IMR-90 (cell line): ENCODE measurements at regions of chr3 and their contacts with region 1.

Region 1: DNA sequence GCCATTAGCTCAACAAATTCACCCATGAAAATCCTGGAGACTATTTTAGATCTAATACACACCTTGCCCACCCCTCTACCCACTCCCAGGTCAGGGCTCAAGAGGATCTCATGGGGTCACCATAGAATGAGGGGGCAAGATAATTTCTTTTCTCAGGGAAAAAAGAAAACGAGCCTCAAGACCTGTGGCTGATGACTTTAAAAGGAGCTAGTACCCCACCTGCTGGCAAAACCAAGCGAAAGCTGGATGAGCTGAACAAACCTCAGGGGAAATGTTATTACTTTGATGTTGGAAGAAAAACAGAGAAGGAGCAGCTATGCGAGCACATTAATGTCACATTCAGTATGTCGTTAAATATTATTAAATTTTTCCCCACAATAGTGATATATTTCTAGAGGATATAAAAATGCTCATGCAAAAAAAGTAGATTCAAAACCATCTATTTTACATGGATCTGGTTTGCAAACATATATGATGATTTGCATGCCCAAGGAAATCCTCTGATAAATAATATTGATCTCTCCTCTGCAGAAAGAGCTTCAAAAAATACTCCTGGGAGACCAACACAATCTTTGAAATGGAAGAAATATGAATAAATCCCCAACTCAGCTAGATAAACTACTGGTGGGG is 37.7 kb downstream of the PLD1 start:
- DNase-seq: peak; percentile 76
- ATAC-seq: peak; percentile 41
- H3K4me3 ChIP-seq: no peak overlapping the region
- H3K27ac ChIP-seq: no peak overlapping the region
- H3K4me1 ChIP-seq: peaks cover 5% of the 10 kb centered on the region; the same call in 1 of the 2 replicates
- H3K27me3 ChIP-seq: no peaks in the 10 kb centered on the region
- CTCF ChIP-seq: peak; percentile 78
- POLR2A ChIP-seq: no peak
- RAD21 ChIP-seq: peak; percentile 84

Region 2: DNA sequence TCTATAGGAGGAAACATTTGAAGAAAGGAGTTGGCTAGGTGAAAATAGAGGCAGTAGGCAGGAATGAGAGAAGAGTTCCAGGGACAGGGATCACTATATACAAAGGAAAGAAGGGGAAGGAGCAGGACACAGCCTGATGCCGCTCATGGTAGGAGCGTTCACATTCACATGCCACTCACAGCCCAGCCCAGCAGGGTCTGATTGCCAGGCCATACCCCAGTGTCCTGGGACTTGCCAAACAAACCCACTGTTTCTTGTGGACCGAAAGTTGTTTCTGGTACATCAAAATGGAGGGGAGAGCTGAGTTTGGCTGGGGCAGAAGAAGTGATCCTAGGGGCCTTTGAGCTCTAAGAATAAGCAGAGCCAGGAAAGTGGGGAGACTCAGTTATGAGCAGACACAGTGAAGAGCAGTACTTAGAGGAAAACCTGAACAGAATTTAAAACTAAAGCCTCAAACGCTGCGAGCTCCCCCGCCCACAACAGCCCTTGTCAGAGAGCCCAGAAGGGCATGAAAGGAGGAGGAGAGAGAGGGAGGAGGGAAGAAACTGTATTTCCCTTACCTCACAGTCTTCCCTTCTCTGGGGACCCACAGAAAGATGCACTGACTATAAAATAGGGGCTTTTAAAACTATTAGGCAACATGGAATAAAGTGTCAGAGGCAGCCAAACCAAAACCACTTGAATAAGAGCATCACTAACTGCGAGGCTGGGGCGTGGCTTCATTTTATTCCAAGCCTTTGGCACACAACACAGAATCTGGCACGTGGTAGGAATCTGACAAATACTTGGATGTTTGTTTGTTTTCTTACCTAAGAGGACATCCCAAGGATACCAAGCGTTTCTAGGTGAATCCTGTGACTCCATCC is 1031.6 kb before region 1 on chr3:
- CTCF ChIA-PET with region 1: no interaction called
- POLR2A ChIA-PET with region 1: no interaction called
- dilution Hi-C with region 1: no loop called
- in situ Hi-C with region 1: no loop called
- intact Hi-C with region 1: no loop called
- DNase-seq: peak; percentile 72
- ATAC-seq: peak; percentile 54
- H3K4me3 ChIP-seq: no peak overlapping the region
- H3K27ac ChIP-seq: peak overlapping the region; percentile 88
- H3K4me1 ChIP-seq: peaks cover 22% of the 10 kb centered on the region
- H3K27me3 ChIP-seq: no peaks in the 10 kb centered on the region
- CTCF ChIP-seq: no peak
- POLR2A ChIP-seq: no peak
- RAD21 ChIP-seq: no peak

Region 3: DNA sequence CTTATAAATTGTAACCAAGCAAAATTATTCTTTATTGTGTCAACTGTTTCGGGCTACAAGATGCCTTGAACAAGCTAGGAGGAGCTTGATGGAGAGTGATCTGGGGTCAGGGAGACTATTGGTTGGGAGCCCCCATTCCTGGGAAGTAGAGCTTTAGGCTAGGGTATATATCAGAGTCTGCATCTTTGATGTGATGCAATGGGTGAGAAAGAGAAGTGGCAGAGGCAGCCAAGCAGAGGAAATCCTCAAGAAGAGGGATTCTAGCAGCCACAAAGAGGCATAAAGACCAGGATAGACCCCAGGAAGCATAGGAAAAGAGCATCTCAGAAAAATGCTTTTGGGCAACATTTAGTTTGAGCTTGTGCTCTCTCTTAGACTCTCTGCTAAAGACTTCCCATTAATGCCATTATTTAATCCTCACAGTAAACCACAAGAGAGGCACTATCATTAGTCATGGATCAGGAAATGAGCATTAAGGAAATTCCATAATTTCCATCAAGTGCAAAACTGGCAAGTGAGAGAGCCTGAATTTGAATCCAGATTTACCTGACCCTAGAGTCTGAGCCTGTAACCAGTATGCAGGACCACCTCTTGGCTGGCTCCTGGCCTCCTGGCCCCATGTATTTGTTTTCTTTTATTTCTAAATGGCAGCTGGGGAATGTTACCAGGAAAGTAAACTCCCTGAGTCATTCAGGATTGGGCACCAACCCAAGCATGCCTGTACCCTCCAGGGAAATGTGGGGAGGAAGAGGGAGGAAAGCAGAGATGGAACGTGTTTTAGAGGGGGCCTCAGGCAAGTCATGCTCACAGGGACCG is 1021.3 kb before region 1 on chr3:
- CTCF ChIA-PET with region 1: no interaction called
- POLR2A ChIA-PET with region 1: no interaction called
- dilution Hi-C with region 1: no loop called
- in situ Hi-C with region 1: no loop called
- intact Hi-C with region 1: loop called (anchors 10 kb)
- DNase-seq: peak; percentile 82
- ATAC-seq: peak; percentile 57
- H3K4me3 ChIP-seq: no peak overlapping the region
- H3K27ac ChIP-seq: peak overlapping the region; percentile 97
- H3K4me1 ChIP-seq: peaks cover 28% of the 10 kb centered on the region
- H3K27me3 ChIP-seq: no peaks in the 10 kb centered on the region
- CTCF ChIP-seq: no peak
- POLR2A ChIP-seq: no peak
- RAD21 ChIP-seq: no peak

Region 4: GRCh38 chr3:170961616-170962400 is 810.7 kb before region 1 on chr3:
- CTCF ChIA-PET with region 1: interaction called, 4 read pairs
- POLR2A ChIA-PET with region 1: no interaction called
- dilution Hi-C with region 1: no loop called
- in situ Hi-C with region 1: loop called (anchors 25 kb)
- intact Hi-C with region 1: loop called (anchors 1 kb)
- DNase-seq: peak; percentile 54
- ATAC-seq: peak; percentile 75
- H3K4me3 ChIP-seq: no peak overlapping the region
- H3K27ac ChIP-seq: no peak overlapping the region
- H3K4me1 ChIP-seq: peaks cover 4% of the 10 kb centered on the region; the same call in 1 of the 2 replicates
- H3K27me3 ChIP-seq: no peaks in the 10 kb centered on the region
- CTCF ChIP-seq: peak; percentile 71
- POLR2A ChIP-seq: no peak
- RAD21 ChIP-seq: peak; percentile 78

Region 5: DNA sequence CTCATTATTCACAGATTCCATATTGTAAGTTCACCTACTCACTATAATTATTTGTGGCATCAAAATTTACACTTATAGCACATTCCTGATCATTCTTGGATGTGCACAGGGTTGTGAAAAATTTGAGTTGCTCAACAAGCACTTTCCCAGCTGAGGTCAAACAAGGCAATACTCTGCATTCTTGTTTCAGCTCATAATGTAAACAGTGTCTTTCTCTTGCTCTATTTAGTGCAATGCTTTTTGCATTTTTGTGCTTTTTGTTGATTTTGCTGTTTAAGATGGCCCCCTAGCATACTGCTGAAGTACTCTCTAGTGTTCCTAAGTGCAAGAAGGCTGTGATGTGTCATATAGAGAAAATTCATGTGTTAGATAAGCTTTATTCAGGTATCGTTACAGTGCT is 245.7 kb before region 1 on chr3:
- CTCF ChIA-PET with region 1: no interaction called
- POLR2A ChIA-PET with region 1: no interaction called
- dilution Hi-C with region 1: no loop called
- in situ Hi-C with region 1: no loop called
- intact Hi-C with region 1: no loop called
- DNase-seq: peak; percentile 87
- ATAC-seq: peak; percentile 80
- H3K4me3 ChIP-seq: no peak overlapping the region
- H3K27ac ChIP-seq: peak overlapping the region; percentile 84; the same call in 1 of the 2 replicates
- H3K4me1 ChIP-seq: peaks cover 23% of the 10 kb centered on the region
- H3K27me3 ChIP-seq: no peaks in the 10 kb centered on the region
- CTCF ChIP-seq: no peak
- POLR2A ChIP-seq: no peak
- RAD21 ChIP-seq: peak; percentile 15; the same call in 1 of the 2 replicates

Region 6: DNA sequence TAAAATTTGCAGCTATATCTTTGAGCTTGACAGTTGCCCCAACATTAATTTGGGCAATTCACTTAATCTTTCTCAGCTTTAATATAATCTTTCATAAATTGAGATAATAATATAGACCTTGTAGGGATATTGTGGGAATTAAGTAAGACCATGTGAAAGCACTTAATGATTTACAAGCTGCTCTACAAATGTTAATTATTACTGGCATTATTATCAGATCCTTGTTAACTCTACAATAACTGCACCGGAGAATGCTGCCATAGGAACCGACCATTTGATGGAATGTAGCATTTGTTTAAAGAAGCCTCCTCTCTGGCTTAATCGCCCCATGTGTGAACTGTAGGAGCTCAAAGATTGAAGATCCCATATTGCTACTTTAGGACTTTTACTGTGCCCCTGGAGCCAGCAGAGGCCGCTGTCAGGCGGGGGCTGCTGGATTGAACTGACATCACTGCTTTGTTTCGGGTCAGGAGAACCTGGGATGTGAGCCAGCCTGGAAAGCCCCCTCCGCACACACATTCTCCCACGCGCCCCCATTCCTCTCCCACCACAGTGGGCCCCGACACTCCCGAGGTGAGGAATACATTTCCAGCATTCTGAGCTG is 158.1 kb before region 1 on chr3:
- CTCF ChIA-PET with region 1: interaction called, 11 read pairs
- POLR2A ChIA-PET with region 1: no interaction called
- dilution Hi-C with region 1: no loop called
- in situ Hi-C with region 1: no loop called
- intact Hi-C with region 1: no loop called
- DNase-seq: peak; percentile 41
- ATAC-seq: peak; percentile 66
- H3K4me3 ChIP-seq: no peak overlapping the region
- H3K27ac ChIP-seq: no peak overlapping the region
- H3K4me1 ChIP-seq: no peaks in the 10 kb centered on the region
- H3K27me3 ChIP-seq: no peaks in the 10 kb centered on the region
- CTCF ChIP-seq: peak; percentile 62
- POLR2A ChIP-seq: no peak
- RAD21 ChIP-seq: peak; percentile 60

Region 7: DNA sequence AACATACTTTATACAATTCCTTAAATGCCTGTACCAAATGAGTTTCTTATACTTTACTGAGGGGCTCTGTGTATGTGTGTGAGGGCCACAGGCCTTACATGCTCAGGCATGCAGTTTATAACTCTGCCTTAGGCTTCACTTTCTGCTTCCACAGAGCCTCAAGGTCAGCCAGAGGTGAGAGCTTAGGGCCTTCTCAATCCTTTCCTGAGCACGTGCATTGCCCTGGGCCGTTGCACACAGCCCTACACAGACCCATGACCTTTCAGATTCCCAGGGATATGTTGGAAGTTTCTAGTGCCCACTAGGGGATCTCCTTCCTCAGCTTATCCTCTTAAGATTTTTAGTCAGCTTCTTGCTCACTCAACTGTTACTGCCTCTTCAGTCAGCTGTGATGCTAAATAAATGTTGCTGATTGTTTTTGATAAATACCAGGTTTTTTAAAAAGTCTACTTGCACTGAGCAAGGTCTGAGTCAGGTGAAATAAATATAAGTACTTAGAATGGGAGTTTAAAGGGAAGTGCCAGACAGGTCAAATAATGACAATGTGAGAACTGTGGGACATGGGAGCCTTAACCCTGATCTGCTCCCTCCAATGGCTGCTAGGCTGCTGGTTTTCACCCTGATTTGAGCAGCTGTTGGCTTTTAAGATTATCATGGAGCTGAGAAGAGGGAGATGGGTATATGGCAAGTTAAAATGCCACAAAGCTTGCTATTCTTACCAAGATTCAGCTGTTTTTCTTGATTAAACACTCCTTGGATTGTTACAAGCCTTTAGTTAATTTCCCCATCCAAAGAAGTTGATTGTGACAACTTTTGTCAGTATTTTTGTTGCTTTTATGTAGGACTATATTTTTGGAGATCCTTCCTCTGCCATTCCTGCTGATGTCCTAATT is 131.8 kb before region 1 on chr3:
- CTCF ChIA-PET with region 1: interaction called, 11 read pairs
- POLR2A ChIA-PET with region 1: no interaction called
- dilution Hi-C with region 1: no loop called
- in situ Hi-C with region 1: loop called (anchors 5 kb)
- intact Hi-C with region 1: no loop called
- DNase-seq: peak; percentile 56
- ATAC-seq: peak; percentile 91
- H3K4me3 ChIP-seq: no peak overlapping the region
- H3K27ac ChIP-seq: peak overlapping the region; percentile 67
- H3K4me1 ChIP-seq: peaks cover 5% of the 10 kb centered on the region
- H3K27me3 ChIP-seq: no peaks in the 10 kb centered on the region
- CTCF ChIP-seq: peak; percentile 32
- POLR2A ChIP-seq: no peak
- RAD21 ChIP-seq: no peak

Region 8: DNA sequence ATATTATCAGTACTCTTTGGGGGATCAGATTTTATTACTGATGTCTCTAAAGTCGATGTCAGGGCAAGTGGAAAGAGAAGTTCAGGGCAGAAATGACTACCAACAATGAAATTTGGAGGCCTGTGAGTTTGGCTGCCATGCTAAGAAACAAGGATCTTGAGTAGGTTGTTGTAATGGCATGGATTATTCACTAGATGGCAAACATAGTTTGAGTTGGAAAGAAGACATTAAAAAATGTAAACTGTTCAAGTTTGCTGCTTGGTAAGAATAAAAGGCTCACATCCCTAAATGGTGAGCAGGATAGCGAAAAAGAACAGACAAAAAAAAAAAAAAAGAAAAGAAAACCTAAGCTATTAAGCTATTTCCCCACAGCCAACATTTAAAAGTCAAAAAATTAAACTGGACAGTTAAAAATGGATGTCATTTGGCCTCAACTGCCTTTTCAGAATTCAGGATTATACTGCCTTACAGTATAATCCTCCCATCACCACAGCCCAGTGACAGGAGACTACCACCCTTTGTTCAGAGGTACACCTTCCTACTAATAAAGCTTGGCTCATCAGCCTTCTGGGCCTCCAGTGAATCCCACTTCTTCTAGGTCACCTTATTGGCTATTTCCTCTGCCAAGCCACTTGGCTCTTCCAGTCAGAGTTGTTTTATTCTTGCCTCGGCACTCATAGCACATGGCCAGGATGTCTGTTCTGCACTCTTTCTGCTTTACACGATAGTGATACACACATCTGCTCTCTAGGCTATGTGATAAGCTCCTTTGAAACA is 126.0 kb before region 1 on chr3:
- CTCF ChIA-PET with region 1: interaction called, 11 read pairs
- POLR2A ChIA-PET with region 1: no interaction called
- dilution Hi-C with region 1: no loop called
- in situ Hi-C with region 1: loop called (anchors 5 kb)
- intact Hi-C with region 1: loop called (anchors 1 kb)
- DNase-seq: peak; percentile 80
- ATAC-seq: peak; percentile 90
- H3K4me3 ChIP-seq: no peak overlapping the region
- H3K27ac ChIP-seq: no peak overlapping the region
- H3K4me1 ChIP-seq: peaks cover 2% of the 10 kb centered on the region; the same call in 1 of the 2 replicates
- H3K27me3 ChIP-seq: no peaks in the 10 kb centered on the region
- CTCF ChIP-seq: peak; percentile 76
- POLR2A ChIP-seq: no peak
- RAD21 ChIP-seq: peak; percentile 83

Region 9: DNA sequence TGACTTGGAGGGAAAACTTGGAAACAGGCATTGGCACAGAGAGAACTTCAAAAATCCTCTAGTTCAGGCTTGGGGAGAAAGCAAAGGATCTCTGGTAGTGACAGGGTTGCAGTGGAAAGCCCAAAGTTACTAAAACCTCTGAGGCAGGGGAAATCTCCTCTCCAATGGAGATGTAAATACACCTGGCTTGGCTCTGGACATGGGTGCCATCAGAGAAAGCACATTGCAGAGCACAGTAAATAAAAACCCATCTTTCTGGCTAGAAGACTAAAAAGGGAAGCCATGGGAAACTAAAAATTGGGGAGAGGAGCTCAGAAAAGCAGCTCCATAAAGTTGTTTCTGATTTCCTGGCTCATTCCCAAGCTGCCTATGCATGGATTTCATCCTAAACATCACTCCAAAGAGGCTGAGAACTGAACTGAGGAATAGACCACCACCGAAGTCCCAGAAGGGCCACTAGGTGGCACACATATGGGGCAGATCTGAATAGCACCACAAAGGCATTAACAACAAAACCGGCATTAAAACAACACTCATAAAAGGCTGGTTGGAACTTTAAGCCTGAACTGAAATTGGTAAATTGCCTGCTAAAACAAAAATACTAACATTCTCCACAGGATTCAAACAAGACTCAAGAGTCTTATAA is 68.7 kb before region 1 on chr3:
- CTCF ChIA-PET with region 1: interaction called, 5 read pairs
- POLR2A ChIA-PET with region 1: no interaction called
- dilution Hi-C with region 1: no loop called
- in situ Hi-C with region 1: no loop called
- intact Hi-C with region 1: loop called (anchors 1 kb)
- DNase-seq: peak; percentile 37
- ATAC-seq: peak; percentile 62
- H3K4me3 ChIP-seq: no peak overlapping the region
- H3K27ac ChIP-seq: no peak overlapping the region
- H3K4me1 ChIP-seq: no peaks in the 10 kb centered on the region
- H3K27me3 ChIP-seq: no peaks in the 10 kb centered on the region
- CTCF ChIP-seq: peak; percentile 53
- POLR2A ChIP-seq: no peak
- RAD21 ChIP-seq: peak; percentile 64